Activated B cell treated with CpG ODN at 0.5 μM for 24 hours (primary cell): ENCODE measurements at regions of chr4 and their contacts with region 1.

Region 1: DNA sequence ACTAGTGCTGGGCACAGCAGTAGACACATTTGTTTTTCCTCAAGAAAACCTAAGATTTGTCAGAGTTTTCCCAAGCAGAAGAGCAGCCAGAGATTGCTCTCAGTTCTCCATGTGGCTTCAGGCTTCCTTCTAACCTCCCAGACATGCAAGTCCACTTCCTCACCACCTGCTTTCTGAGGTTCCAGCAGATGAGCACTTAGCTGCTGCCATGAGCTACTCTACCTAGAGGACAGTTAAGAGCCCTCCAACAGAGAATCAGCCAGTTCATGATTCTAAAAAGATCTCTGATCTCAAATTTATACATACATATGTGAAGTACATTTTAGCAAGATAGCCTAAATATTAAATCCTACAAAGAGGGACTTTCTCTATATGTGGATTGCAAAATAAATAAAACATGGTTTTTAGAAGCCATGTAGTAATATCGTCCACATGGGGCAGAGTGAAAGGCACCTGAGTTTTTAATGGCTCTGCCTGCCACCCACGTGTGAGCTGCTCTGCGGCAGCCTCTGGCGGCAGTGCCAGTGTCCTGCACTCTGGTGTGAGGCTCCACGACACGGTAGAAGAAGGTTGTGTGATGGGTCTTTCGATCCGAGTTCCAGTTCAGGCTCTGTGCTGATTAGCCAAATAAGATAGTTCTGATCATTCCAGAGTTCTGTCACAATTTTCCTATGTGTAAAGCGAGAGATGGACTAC is 10.3 kb downstream of the CYP4V2 start:
- DNase-seq: peak; percentile 32
- ATAC-seq: peak; percentile 91
- H3K4me3 Mint-ChIP-seq: no peak overlapping the region
- H3K27ac Mint-ChIP-seq: peak overlapping the region; percentile 33
- H3K4me1 Mint-ChIP-seq: peaks cover 23% of the 10 kb centered on the region
- H3K27me3 Mint-ChIP-seq: no peaks in the 10 kb centered on the region
- CTCF ChIP-seq: no peak

Region 2: GRCh38 chr4:185640811-185641675 is 560.6 kb before region 1 on chr4:
- CTCF ChIA-PET with region 1: no interaction called
- POLR2A ChIA-PET with region 1: no interaction called
- intact Hi-C with region 1: loop called (anchors 5 kb)
- DNase-seq: no peak
- ATAC-seq: no peak
- H3K4me3 Mint-ChIP-seq: no peak overlapping the region
- H3K27ac Mint-ChIP-seq: no peak overlapping the region
- H3K4me1 Mint-ChIP-seq: no peaks in the 10 kb centered on the region
- H3K27me3 Mint-ChIP-seq: peaks cover 31% of the 10 kb centered on the region
- CTCF ChIP-seq: no peak

Region 3: DNA sequence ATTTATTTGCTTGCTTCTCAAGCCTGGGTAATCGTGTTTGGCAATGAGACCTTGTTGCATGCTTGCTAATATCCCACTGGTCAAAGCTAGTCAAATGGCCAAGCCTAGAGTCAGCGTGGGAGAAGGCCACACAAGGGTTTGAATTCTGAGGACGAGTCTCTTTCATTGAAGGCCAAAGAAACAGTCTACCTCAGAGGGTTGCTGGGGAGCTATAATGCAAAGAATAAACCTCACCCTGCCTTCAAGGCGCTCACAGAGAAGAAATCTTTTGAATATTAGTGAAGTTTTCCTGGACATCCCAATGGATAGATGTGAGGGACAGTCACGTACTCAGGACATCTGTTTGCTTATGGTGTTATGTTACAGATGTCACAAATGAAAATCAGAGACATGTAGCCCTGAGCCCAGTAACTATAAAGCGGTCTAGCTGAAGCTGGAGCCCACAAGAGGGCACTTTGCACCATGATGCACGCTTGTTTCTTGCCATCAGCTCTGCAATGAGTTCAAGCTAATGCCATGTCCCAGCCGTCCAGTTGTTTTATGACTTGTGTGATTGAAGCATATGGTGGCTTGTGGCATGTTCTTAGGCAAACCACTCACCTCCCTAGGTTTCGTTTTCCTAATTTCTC is 133.8 kb before region 1 on chr4:
- CTCF ChIA-PET with region 1: interaction called, 8 read pairs
- POLR2A ChIA-PET with region 1: no interaction called
- intact Hi-C with region 1: loop called (anchors 2 kb)
- DNase-seq: no peak
- ATAC-seq: no peak
- H3K4me3 Mint-ChIP-seq: no peak overlapping the region
- H3K27ac Mint-ChIP-seq: no peak overlapping the region
- H3K4me1 Mint-ChIP-seq: peaks cover 7% of the 10 kb centered on the region
- H3K27me3 Mint-ChIP-seq: peaks cover 39% of the 10 kb centered on the region
- CTCF ChIP-seq: no peak

Region 4: GRCh38 chr4:186144142-186144955 is 57.3 kb before region 1 on chr4:
- CTCF ChIA-PET with region 1: no interaction called
- POLR2A ChIA-PET with region 1: no interaction called
- intact Hi-C with region 1: no loop called
- DNase-seq: no peak
- ATAC-seq: no peak
- H3K4me3 Mint-ChIP-seq: peak overlapping the region; percentile 57
- H3K27ac Mint-ChIP-seq: no peak overlapping the region
- H3K4me1 Mint-ChIP-seq: peaks cover 11% of the 10 kb centered on the region
- H3K27me3 Mint-ChIP-seq: peaks cover 46% of the 10 kb centered on the region
- CTCF ChIP-seq: no peak

Region 5: GRCh38 chr4:186191200-186192065 is 10.2 kb before region 1 on chr4 and contains the start of gene CYP4V2:
- CTCF ChIA-PET with region 1: interaction called, 3 read pairs
- POLR2A ChIA-PET with region 1: interaction called, 4 read pairs
- intact Hi-C with region 1: loop called (anchors 1 kb)
- DNase-seq: peak; percentile 84
- ATAC-seq: peak; percentile 86
- H3K4me3 Mint-ChIP-seq: peak within 1 kb of the TSS; percentile 90
- H3K27ac Mint-ChIP-seq: peak within 1 kb of the TSS; percentile 88
- H3K4me1 Mint-ChIP-seq: peaks cover 26% of the 10 kb centered on the region
- H3K27me3 Mint-ChIP-seq: peaks cover 2% of the 10 kb centered on the region
- CTCF ChIP-seq: no peak
- total RNA-seq, gene CYP4V2: 7.7 and 9.5 TPM in 2 replicates

Region 6: DNA sequence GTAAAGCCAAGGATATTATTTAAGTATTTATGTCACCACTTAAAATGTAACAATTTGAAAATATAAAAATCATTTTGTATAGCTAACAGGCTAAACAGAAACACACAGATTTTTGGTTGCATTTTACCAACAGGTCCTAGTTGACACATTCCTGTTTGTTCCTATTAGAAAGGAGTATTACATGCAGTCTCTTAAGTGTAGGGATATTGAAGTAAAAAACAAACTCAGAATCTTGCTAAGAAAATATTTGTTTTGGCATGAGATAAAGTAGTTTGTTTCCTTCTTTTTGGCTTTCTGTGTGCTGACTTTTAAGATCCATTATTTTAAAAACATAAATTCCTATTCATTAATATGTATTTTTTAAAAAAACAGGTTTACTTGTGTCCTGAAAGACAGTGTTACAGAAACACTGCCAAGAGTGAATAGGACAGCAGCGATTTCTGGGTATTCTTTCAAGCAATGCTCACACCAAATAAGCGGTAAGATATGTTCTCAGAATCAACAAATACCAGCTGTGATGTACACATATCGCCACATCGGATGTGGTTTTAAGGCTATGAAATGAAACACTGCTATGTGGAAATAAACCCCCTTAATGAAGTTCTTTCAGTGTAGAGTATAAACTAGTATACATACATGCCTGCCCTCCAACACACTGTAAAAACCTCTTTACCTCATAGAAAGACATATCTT is 71.2 kb after region 1 on chr4:
- CTCF ChIA-PET with region 1: no interaction called
- POLR2A ChIA-PET with region 1: no interaction called
- intact Hi-C with region 1: no loop called
- DNase-seq: no peak
- ATAC-seq: no peak
- H3K4me3 Mint-ChIP-seq: no peak overlapping the region
- H3K27ac Mint-ChIP-seq: no peak overlapping the region
- H3K4me1 Mint-ChIP-seq: no peaks in the 10 kb centered on the region
- H3K27me3 Mint-ChIP-seq: peaks cover 2% of the 10 kb centered on the region
- CTCF ChIP-seq: no peak

Region 7: DNA sequence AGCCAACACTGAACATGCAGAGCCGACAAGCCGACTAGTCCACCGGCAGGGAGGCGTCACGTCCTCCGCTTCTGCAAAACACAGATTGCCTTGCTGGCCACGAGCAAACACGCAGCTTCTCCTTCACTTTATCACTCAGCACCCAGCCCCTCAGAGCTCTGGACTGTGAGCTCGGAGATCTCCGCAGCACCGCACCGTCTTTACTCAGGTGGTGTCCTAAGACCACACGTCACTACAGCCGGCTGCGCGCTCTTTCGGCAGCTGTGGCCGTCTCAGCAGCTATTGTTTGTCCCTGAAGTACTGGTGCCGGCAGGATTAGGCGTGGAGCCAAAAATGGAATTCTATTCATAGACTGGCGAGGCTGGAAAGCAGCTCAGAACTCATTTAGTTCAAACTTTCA is 449.9 kb after region 1 on chr4:
- CTCF ChIA-PET with region 1: no interaction called
- POLR2A ChIA-PET with region 1: no interaction called
- intact Hi-C with region 1: no loop called
- DNase-seq: no peak
- ATAC-seq: no peak
- H3K4me3 Mint-ChIP-seq: no peak overlapping the region
- H3K27ac Mint-ChIP-seq: no peak overlapping the region
- H3K4me1 Mint-ChIP-seq: no peaks in the 10 kb centered on the region
- H3K27me3 Mint-ChIP-seq: no peaks in the 10 kb centered on the region
- CTCF ChIP-seq: no peak

Region 8: GRCh38 chr4:187632260-187632995 is 1430.7 kb after region 1 on chr4:
- CTCF ChIA-PET with region 1: no interaction called
- POLR2A ChIA-PET with region 1: no interaction called
- intact Hi-C with region 1: no loop called
- DNase-seq: no peak
- ATAC-seq: no peak
- H3K4me3 Mint-ChIP-seq: no peak overlapping the region
- H3K27ac Mint-ChIP-seq: no peak overlapping the region
- H3K4me1 Mint-ChIP-seq: no peaks in the 10 kb centered on the region
- H3K27me3 Mint-ChIP-seq: no peaks in the 10 kb centered on the region
- CTCF ChIP-seq: no peak